Activated CD4-positive, alpha-beta T cell treated with anti-CD3 and anti-CD28 coated beads, Interleukin-2, amount 10 ng/mL, durations not matched to agents 24 days and 14 days (primary cell): ENCODE measurements at regions of chr14 and their contacts with region 1.

Region 1: GRCh38 chr14:50148799-50149198 is 32.4 kb upstream of the VCPKMT start:
- DNase-seq: no peak
- H3K4me3 Mint-ChIP-seq: no peak overlapping the region
- H3K27ac Mint-ChIP-seq: no peak overlapping the region
- H3K4me1 Mint-ChIP-seq: no peaks in the 10 kb centered on the region
- H3K27me3 Mint-ChIP-seq: no peaks in the 10 kb centered on the region

Region 2: DNA sequence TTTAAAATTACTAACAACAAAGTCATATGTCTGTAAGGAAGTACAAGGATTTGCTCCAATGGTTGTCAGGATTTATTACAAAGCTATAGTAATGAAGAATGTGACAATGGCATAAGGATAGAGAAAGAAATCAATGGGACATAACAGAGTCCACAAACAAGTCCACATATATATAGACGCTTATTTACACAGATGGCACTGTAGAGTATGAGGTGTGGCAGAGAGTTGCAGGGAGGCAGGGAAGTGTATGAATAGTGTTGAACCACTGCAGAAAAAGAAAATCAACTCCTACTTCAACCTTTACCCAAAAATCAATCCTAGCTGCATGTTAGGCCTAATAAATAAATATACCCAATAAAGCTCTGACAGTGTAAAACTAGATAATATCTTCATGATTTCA is 61.3 kb after region 1 on chr14:
- intact Hi-C with region 1: loop called (anchors 10 kb)
- DNase-seq: no peak
- H3K4me3 Mint-ChIP-seq: no peak overlapping the region
- H3K27ac Mint-ChIP-seq: no peak overlapping the region
- H3K4me1 Mint-ChIP-seq: peaks cover 4% of the 10 kb centered on the region
- H3K27me3 Mint-ChIP-seq: no peaks in the 10 kb centered on the region

Region 3: GRCh38 chr14:50249136-50249800 is 100.5 kb after region 1 on chr14:
- intact Hi-C with region 1: no loop called
- DNase-seq: no peak
- H3K4me3 Mint-ChIP-seq: no peak overlapping the region
- H3K27ac Mint-ChIP-seq: no peak overlapping the region
- H3K4me1 Mint-ChIP-seq: no peaks in the 10 kb centered on the region
- H3K27me3 Mint-ChIP-seq: no peaks in the 10 kb centered on the region